ENCODE measurements at regions of chr1 and their contacts with region 1.

Region 1: DNA sequence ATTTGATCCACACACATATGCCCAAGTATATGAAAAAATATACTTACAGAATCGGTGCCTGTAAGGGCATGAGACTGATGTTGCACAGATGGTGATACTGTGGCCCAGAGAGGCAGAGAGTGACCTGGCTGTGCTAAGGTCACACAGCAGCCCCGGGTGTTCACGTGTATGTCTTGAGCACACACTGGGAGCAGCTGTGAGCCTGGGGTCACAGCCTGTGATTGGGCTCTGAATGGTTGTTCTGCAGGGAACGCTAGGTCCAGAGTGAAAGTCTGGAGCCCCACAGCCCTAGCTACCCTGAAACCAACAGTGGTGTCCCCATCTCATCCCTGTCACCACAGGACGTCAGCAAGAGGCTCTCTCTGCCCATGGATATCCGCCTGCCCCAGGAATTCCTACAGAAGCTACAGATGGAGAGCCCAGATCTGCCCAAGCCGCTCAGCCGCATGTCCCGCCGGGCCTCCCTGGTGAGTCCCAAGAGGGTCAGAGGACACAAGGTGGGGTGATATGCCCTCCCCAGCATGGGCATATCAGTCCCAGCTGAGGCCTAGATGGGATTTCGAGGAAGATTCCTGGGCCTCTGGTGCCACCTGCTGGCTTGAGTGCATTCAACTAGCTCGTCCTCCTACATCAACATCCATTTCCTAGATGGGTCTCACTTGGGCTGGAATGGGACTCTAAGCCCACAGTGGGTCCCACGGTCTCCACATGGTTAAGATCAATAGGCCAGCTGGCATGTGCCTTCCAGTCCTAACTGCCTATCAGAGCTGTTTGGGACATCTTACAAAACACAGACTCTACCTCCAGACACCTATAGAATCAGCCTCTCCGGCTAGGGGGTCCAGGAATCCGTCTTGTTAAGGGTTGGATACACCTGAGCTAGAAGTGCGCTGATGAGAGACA is 19.7 kb downstream of the CDK18 start:
- DNase-seq: peak; percentile 33
- H3K4me3 ChIP-seq: no peak overlapping the region
- H3K27ac ChIP-seq: no peak overlapping the region
- H3K27me3 ChIP-seq: peaks cover 33% of the 10 kb centered on the region
- CTCF ChIP-seq: peak; percentile 82

Region 2: GRCh38 chr1:205321164-205321958 is 202.8 kb before region 1 on chr1 and contains the start of gene NUAK2:
- CTCF ChIA-PET with region 1: interaction called, 13 read pairs
- POLR2A ChIA-PET with region 1: no interaction called
- DNase-seq: peak; percentile 61
- H3K4me3 ChIP-seq: peak within 1 kb of the TSS; percentile 93
- H3K27ac ChIP-seq: peak within 1 kb of the TSS; percentile 80
- H3K27me3 ChIP-seq: peaks cover 4% of the 10 kb centered on the region
- CTCF ChIP-seq: peak; percentile 41
- polyA plus RNA-seq, gene NUAK2: 7.0 and 8.2 TPM in 2 replicates

Region 3: DNA sequence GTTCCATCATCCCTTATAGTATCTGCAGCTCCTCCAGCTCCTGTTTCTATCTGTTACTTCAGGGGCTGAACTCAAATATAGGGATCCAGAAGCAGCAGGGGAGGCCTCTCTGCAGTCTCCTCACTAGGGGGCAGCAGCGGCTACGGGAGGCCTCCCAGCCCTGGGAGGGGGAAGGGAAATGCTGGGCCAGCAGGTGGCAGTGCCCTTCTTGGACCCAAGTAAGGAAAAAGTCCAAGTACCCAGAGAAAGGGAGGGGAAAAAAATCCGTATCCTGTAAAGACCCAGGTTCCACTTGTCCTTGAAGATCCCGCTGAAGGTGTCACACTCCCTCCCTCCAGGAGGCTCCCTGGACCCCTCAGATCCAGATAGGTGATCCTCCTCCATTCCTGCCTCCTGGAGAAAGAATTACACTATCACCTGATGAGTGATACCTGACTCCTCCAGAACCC is 188.5 kb before region 1 on chr1:
- CTCF ChIA-PET with region 1: interaction called, 51 read pairs
- POLR2A ChIA-PET with region 1: no interaction called
- DNase-seq: no peak
- H3K4me3 ChIP-seq: no peak overlapping the region
- H3K27ac ChIP-seq: no peak overlapping the region
- H3K27me3 ChIP-seq: peaks cover 41% of the 10 kb centered on the region
- CTCF ChIP-seq: peak; percentile 98

Region 4: GRCh38 chr1:205396967-205397616 is 127.0 kb before region 1 on chr1:
- CTCF ChIA-PET with region 1: interaction called, 31 read pairs
- POLR2A ChIA-PET with region 1: no interaction called
- DNase-seq: no peak
- H3K4me3 ChIP-seq: no peak overlapping the region
- H3K27ac ChIP-seq: no peak overlapping the region
- H3K27me3 ChIP-seq: peaks cover 9% of the 10 kb centered on the region
- CTCF ChIP-seq: peak; percentile 70

Region 5: GRCh38 chr1:205466595-205467181 is 57.5 kb before region 1 on chr1:
- CTCF ChIA-PET with region 1: no interaction called
- POLR2A ChIA-PET with region 1: no interaction called
- DNase-seq: no peak
- H3K4me3 ChIP-seq: no peak overlapping the region
- H3K27ac ChIP-seq: no peak overlapping the region
- H3K27me3 ChIP-seq: peaks cover 46% of the 10 kb centered on the region
- CTCF ChIP-seq: no peak

Region 6: DNA sequence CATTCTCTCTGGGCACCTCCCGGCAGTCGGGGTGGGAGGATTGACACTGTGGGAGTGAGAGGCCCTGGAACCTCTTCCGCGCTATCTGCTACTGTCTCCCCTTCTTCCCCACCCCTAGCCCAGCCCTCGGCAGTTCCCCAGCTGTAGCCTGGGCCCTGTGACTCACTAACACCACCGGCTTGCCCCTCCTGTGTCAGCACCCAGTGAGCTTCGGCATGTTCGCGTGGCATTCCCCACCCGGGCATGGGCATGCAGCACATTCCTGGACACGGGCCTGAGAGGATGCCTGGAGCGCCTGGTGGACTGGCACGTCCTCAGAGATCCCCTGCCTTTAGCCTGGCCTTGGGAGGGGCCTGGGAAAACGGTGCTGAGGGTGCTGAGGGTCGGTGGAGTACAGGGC is 18.4 kb before region 1 on chr1:
- CTCF ChIA-PET with region 1: interaction called, 12 read pairs
- POLR2A ChIA-PET with region 1: no interaction called
- DNase-seq: no peak
- H3K4me3 ChIP-seq: no peak overlapping the region
- H3K27ac ChIP-seq: no peak overlapping the region
- H3K27me3 ChIP-seq: peaks cover 48% of the 10 kb centered on the region
- CTCF ChIP-seq: no peak

Region 7: DNA sequence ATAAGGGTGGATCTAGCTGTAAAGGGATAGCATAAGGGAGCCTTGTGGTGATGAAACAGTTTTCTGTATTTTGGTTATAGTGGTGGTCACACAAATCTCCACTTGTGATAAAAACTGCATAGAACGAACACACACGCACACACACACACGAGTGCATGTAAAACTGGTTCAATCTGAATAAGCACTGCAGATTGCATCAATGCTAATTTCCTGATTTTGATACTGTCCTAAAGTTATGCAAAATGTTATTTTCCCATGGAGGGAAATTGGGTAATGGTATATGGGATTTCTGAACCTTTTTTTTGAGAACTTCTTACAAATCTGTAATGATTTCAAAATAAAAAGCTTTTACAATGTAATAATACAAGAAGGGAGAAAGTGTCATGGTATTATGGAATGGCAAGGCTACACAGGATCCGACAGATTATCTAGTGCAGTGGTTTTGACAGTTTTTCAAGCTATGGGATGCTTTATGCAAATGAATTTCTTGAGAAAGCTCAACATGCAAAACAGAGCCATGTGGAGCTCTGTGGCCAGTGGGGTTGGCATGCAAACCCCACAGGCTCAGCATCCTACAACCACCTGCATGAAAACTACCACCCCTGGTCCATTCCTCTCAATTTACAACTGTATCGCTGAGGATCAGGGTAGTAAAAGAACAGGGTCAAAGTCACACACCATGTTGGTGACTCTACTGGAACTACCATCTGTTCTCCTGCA is 270.0 kb after region 1 on chr1:
- CTCF ChIA-PET with region 1: no interaction called
- POLR2A ChIA-PET with region 1: no interaction called
- DNase-seq: no peak
- H3K4me3 ChIP-seq: no peak overlapping the region
- H3K27ac ChIP-seq: no peak overlapping the region
- H3K27me3 ChIP-seq: no peaks in the 10 kb centered on the region
- CTCF ChIP-seq: no peak

Region 8: GRCh38 chr1:206030714-206031113 is 506.6 kb after region 1 on chr1:
- CTCF ChIA-PET with region 1: no interaction called
- POLR2A ChIA-PET with region 1: no interaction called
- DNase-seq: peak; percentile 27
- H3K4me3 ChIP-seq: no peak overlapping the region
- H3K27ac ChIP-seq: no peak overlapping the region
- H3K27me3 ChIP-seq: peaks cover 57% of the 10 kb centered on the region
- CTCF ChIP-seq: peak; percentile 96